Spleen (tissue), 13 donors: ENCODE measurements at regions of chr17 and their contacts with region 1.

Region 1: GRCh38 chr17:74961657-74962490 is 10.7 kb downstream of the HID1 start:
- DNase-seq: peak; percentile 91
- H3K4me3 ChIP-seq: no peak overlapping the region
- H3K27ac ChIP-seq: no peak overlapping the region
- H3K4me1 ChIP-seq: peaks cover 0 to 25% (median 13%) of the 10 kb centered on the region in 6 donors
- H3K27me3 ChIP-seq: peaks cover 0 to 21% (median 0%) of the 10 kb centered on the region in 7 donors
- CTCF ChIP-seq: peak; percentile 49 to 89 (median 79)
- POLR2A ChIP-seq: no peak

Region 2: GRCh38 chr17:75205037-75205792 is 243.3 kb after region 1 on chr17 and contains the start of gene NUP85:
- intact Hi-C with region 1: loop called (anchors 10 kb)
- DNase-seq: peak; percentile 97
- H3K4me3 ChIP-seq: peak within 1 kb of the TSS; percentile 69 to 99 (median 82)
- H3K27ac ChIP-seq: peak within 1 kb of the TSS; percentile 93 to 99 (median 96)
- H3K4me1 ChIP-seq: peaks cover 17 to 43% (median 31%) of the 10 kb centered on the region in 6 donors
- H3K27me3 ChIP-seq: no peaks in the 10 kb centered on the region
- CTCF ChIP-seq: peak in 3 of 11 experiments; percentile 12 to 30 (median 14)
- POLR2A ChIP-seq: peak in 2 of 3 donors; percentile 17 to 48
- total RNA-seq, gene NUP85: 35.5 to 83.8 (median 66.1) TPM